Psoas muscle (tissue), 8 donors: ENCODE measurements at regions of chr1 and their contacts with region 1.

Region 1: GRCh38 chr1:78370356-78370755 is 120.4 kb upstream of the PTGFR start:
- DNase-seq: no peak
- ATAC-seq: no peak
- H3K4me3 ChIP-seq: no peak overlapping the region
- H3K27ac ChIP-seq: no peak overlapping the region
- H3K4me1 ChIP-seq: no peaks in the 10 kb centered on the region
- H3K27me3 ChIP-seq: no peaks in the 10 kb centered on the region
- CTCF ChIP-seq: no peak

Region 2: GRCh38 chr1:78401148-78401547 is 30.8 kb after region 1 on chr1:
- intact Hi-C with region 1: no loop called
- DNase-seq: no peak
- ATAC-seq: no peak
- H3K4me3 ChIP-seq: no peak overlapping the region
- H3K27ac ChIP-seq: no peak overlapping the region
- H3K4me1 ChIP-seq: no peaks in the 10 kb centered on the region
- H3K27me3 ChIP-seq: no peaks in the 10 kb centered on the region
- CTCF ChIP-seq: no peak

Region 3: GRCh38 chr1:78972723-78973122 is 602.4 kb after region 1 on chr1:
- intact Hi-C with region 1: loop called in 1 of 2 experiments (anchors 10 kb)
- DNase-seq: no peak
- ATAC-seq: no peak
- H3K4me3 ChIP-seq: no peak overlapping the region
- H3K27ac ChIP-seq: no peak overlapping the region
- H3K4me1 ChIP-seq: no peaks in the 10 kb centered on the region
- H3K27me3 ChIP-seq: no peaks in the 10 kb centered on the region
- CTCF ChIP-seq: no peak